Activated naive CD4-positive, alpha-beta T cell treated with anti-CD3 and anti-CD28 coated beads, Interleukin-2, amount 10 ng/mL, durations not matched to agents 7 days and 5 days (primary cell): ENCODE measurements at regions of chr3 and their contacts with region 1.

Region 1: GRCh38 chr3:56801662-56802377 is at the start of gene ARHGEF3:
- DNase-seq: peak; percentile 90
- H3K4me3 Mint-ChIP-seq: peak within 1 kb of the TSS; percentile 84
- H3K27ac Mint-ChIP-seq: peak within 1 kb of the TSS; percentile 85
- H3K4me1 Mint-ChIP-seq: peaks cover 39% of the 10 kb centered on the region
- H3K27me3 Mint-ChIP-seq: no peaks in the 10 kb centered on the region

Region 2: DNA sequence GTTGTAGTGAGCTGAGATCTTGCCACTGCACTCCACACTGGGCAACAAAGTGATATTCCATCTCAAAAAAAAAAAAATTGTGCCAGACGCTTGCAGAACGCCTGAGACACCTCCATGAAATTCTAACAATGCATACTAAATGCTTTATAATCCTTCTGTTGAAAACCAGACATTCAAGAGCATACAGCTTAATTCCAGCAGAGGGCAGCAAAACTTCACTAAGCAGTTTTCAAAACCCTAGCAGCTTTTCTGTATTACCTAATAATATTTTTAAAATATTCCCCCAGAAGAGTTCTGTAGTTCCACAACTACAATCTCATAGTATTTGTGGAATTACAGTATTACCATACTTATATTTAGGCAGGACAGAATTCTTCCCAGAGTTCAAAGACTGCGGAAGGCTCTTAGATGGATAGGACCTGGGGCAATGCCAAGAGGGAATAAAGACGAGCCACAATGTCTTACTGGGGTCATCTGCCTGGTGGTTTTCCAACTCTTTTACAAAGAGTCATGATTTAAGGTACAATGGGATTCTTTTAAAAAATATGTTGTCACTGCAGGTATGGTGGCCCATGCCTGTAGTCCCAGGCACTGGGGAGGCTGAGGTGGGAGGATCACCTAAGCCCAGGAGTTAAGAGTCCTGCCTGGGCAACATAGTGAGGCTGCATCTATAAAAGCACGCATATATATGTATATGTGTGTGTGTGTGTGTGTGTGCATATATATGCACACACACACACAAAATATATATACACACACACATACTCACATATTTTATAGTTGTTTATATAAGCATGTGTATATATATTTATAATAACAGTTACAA is 99.1 kb before region 1 on chr3:
- CTCF ChIA-PET with region 1: interaction called, 232 read pairs
- DNase-seq: peak; percentile 63
- H3K4me3 Mint-ChIP-seq: no peak overlapping the region
- H3K27ac Mint-ChIP-seq: no peak overlapping the region
- H3K4me1 Mint-ChIP-seq: peaks cover 33% of the 10 kb centered on the region
- H3K27me3 Mint-ChIP-seq: peaks cover 7% of the 10 kb centered on the region

Region 3: GRCh38 chr3:56737006-56737405 is 64.8 kb before region 1 on chr3:
- CTCF ChIA-PET with region 1: interaction called, 10 read pairs
- DNase-seq: no peak
- H3K4me3 Mint-ChIP-seq: no peak overlapping the region
- H3K27ac Mint-ChIP-seq: no peak overlapping the region
- H3K4me1 Mint-ChIP-seq: peaks cover 39% of the 10 kb centered on the region
- H3K27me3 Mint-ChIP-seq: no peaks in the 10 kb centered on the region

Region 4: GRCh38 chr3:56762718-56763117 is 39.1 kb before region 1 on chr3:
- CTCF ChIA-PET with region 1: interaction called, 14 read pairs
- DNase-seq: no peak
- H3K4me3 Mint-ChIP-seq: no peak overlapping the region
- H3K27ac Mint-ChIP-seq: no peak overlapping the region
- H3K4me1 Mint-ChIP-seq: peaks cover 70% of the 10 kb centered on the region
- H3K27me3 Mint-ChIP-seq: no peaks in the 10 kb centered on the region

Region 5: DNA sequence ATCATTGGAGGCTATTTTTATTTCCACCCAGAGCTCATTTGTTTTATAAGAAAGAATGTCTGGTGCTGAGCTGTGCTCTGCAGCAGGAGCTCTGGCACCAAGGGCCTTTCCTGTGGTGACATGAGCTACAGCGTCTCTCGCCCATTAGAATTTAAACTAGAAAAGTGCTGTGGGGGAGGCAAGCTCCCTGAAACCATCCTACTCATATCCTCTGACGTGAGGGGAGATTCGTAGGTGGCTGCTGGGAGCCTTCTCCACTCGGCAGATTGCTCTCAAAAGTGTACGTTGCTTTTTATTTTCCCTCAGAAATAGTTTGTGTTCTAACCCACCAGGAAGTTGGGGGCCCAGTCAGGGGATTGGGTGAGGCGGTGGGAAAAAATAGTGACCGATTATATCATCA is 76.3 kb after region 1 on chr3:
- CTCF ChIA-PET with region 1: interaction called, 10 read pairs
- DNase-seq: peak; percentile 46
- H3K4me3 Mint-ChIP-seq: no peak overlapping the region
- H3K27ac Mint-ChIP-seq: peak overlapping the region; percentile 87
- H3K4me1 Mint-ChIP-seq: peaks cover 70% of the 10 kb centered on the region
- H3K27me3 Mint-ChIP-seq: no peaks in the 10 kb centered on the region

Region 6: DNA sequence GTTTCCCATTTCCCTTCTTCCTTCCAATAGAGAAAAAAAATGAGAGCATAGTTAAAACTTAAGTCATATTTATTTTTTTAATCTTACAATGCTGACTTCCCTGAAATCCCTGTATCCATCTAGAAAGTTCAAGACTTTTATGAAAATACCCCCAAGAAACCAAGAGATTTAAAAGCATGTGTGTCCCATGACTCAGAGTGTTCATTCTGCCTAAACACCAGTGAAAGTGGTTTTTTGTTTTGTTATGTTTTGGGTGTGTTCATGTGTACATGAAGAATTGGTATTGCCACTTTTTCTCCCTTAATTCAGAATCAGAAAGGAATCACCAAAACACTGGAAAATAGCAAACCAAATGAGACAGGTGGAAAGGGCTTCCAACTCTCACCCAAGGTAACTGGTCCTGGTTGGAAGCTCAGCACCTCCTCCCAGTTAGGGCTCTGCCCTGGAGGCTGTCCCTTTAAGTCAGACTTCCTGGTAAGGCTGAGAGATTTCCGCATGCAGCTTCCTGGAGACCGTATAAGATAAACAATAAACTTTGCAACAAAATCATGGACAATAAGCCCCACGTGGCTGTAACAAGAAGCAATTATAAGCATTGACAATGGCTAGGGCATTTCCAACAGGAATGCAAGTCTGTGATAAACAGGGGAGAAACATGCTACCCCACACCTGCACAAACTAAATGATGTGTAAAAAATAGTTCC is 121.9 kb after region 1 on chr3:
- CTCF ChIA-PET with region 1: interaction called, 12 read pairs
- DNase-seq: peak; percentile 66
- H3K4me3 Mint-ChIP-seq: peak overlapping the region; percentile 25
- H3K27ac Mint-ChIP-seq: peak overlapping the region; percentile 84
- H3K4me1 Mint-ChIP-seq: peaks cover 85% of the 10 kb centered on the region
- H3K27me3 Mint-ChIP-seq: no peaks in the 10 kb centered on the region

Region 7: GRCh38 chr3:57026918-57027317 is 225.1 kb after region 1 on chr3:
- CTCF ChIA-PET with region 1: no interaction called
- DNase-seq: no peak
- H3K4me3 Mint-ChIP-seq: no peak overlapping the region
- H3K27ac Mint-ChIP-seq: no peak overlapping the region
- H3K4me1 Mint-ChIP-seq: no peaks in the 10 kb centered on the region
- H3K27me3 Mint-ChIP-seq: peaks cover 19% of the 10 kb centered on the region

Region 8: GRCh38 chr3:58214484-58215316 is 1412.9 kb after region 1 on chr3:
- CTCF ChIA-PET with region 1: no interaction called
- DNase-seq: no peak
- H3K4me3 Mint-ChIP-seq: no peak overlapping the region
- H3K27ac Mint-ChIP-seq: no peak overlapping the region
- H3K4me1 Mint-ChIP-seq: peaks cover 8% of the 10 kb centered on the region
- H3K27me3 Mint-ChIP-seq: peaks cover 42% of the 10 kb centered on the region